H1 (cell line): ENCODE measurements at regions of chr4 and their contacts with region 1.

Region 1: DNA sequence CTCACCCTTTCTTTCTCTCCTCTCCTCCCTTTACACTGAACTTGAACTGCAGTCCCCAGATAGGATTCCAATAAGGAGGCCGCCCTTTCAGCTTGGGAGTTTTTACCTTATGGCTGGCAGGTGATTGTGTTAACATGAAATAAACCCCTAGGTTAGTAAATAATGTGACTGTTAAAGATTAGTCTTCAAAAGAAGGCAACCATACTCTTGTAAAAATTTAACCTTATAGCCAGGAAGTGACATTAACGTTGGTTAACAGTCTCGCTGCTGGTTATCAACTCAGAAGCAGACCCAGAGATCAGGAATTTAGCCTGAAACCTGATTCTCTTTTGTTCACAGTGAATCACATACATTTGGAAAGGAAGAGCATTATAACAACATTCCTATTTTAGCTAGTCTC is 15.2 kb downstream of the FHDC1 start:
- DNase-seq: no peak
- H3K4me3 ChIP-seq: peak overlapping the region in 1 of 4 experiments; percentile 30; a peak in 2 of 8 replicates
- H3K27ac ChIP-seq: no peak overlapping the region; the same call in 1 of the 2 replicates
- H3K4me1 ChIP-seq: peaks cover 7 to 22% (median 14%) of the 10 kb centered on the region in 4 experiments
- H3K27me3 ChIP-seq: no peaks in the 10 kb centered on the region
- CTCF ChIP-seq: no peak
- EP300 ChIP-seq: no peak
- POLR2A ChIP-seq: no peak
- RAD21 ChIP-seq: no peak

Region 2: GRCh38 chr4:152937336-152938236 is 13.8 kb before region 1 on chr4:
- CTCF ChIA-PET with region 1: interaction called, 35 read pairs
- POLR2A ChIA-PET with region 1: interaction called, 61 read pairs
- DNase-seq: peak in 1 of 2 experiments; percentile 63
- H3K4me3 ChIP-seq: peak overlapping the region; percentile 79 to 97 (median 82)
- H3K27ac ChIP-seq: no peak overlapping the region
- H3K4me1 ChIP-seq: peaks cover 0 to 8% (median 5%) of the 10 kb centered on the region in 4 experiments; a peak in 4 of 7 replicates
- H3K27me3 ChIP-seq: peaks cover 0 to 13% (median 5%) of the 10 kb centered on the region in 4 experiments; a peak in 3 of 7 replicates
- CTCF ChIP-seq: no peak
- EP300 ChIP-seq: no peak
- POLR2A ChIP-seq: no peak
- RAD21 ChIP-seq: no peak